Sigmoid colon (tissue), 7 donors: ENCODE measurements at regions of chr2 and their contacts with region 1.

Region 1: GRCh38 chr2:75199428-75200011 is at the start of gene TACR1:
- DNase-seq: peak; percentile 88
- H3K4me3 ChIP-seq: peak within 1 kb of the TSS; percentile 26 to 50 (median 46)
- H3K27ac ChIP-seq: peak within 1 kb of the TSS in 3 of 4 donors; percentile 27 to 48 (median 44)
- H3K4me1 ChIP-seq: peaks cover 0 to 28% (median 24%) of the 10 kb centered on the region in 4 donors
- H3K27me3 ChIP-seq: peaks cover 0 to 16% (median 0%) of the 10 kb centered on the region in 3 donors
- CTCF ChIP-seq: peak; percentile 27 to 55 (median 34)
- EP300 ChIP-seq: no peak
- POLR2A ChIP-seq: no peak
- total RNA-seq, gene TACR1: 0.54 to 2.5 (median 1.6) TPM

Region 2: GRCh38 chr2:75064691-75065396 is 134.7 kb before region 1 on chr2:
- intact Hi-C with region 1: loop called (anchors 5 kb)
- DNase-seq: peak; percentile 65
- H3K4me3 ChIP-seq: no peak overlapping the region
- H3K27ac ChIP-seq: no peak overlapping the region
- H3K4me1 ChIP-seq: peaks cover 0 to 13% (median 0%) of the 10 kb centered on the region in 4 donors
- H3K27me3 ChIP-seq: no peaks in the 10 kb centered on the region
- CTCF ChIP-seq: peak in 3 of 4 experiments; percentile 34 to 51 (median 49)
- EP300 ChIP-seq: no peak
- POLR2A ChIP-seq: no peak

Region 3: DNA sequence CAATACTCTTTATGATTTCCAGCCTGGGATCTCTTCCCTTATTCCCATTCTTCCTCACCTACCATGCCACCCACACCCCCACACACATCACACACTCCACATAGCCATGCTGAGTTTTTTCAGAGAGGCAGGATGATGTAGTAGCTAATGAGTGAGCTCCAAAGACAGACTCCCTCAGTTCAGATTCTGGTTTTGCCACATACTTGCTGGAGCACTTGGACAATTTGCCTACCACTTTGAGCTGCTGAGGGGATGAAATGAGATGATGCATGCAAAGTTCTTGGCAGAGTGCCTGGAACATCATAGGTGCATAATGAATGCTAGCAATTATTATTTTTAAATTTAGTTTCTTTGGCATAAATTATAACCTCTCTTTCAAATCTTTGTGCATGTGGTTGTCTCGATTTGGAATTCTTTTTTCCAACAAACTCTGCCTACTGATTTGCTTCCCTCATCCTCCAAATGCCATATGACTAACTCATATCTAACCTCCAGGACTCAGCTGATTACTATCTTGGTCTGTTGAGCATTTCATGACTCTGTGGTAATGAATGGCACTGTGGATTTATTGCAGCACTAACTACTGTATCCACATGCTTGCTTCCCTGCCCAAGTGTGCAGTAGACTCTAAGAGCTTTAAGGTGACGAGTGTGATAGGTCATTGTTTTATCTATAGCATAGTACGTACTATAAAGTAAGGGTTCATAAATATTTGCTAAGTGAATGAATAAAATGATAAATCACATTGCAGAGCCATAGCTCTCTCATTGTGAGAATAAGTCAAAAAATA is 99.3 kb before region 1 on chr2:
- intact Hi-C with region 1: no loop called
- DNase-seq: no peak
- H3K4me3 ChIP-seq: no peak overlapping the region
- H3K27ac ChIP-seq: no peak overlapping the region
- H3K4me1 ChIP-seq: peaks cover 0 to 10% (median 3%) of the 10 kb centered on the region in 4 donors
- H3K27me3 ChIP-seq: no peaks in the 10 kb centered on the region
- CTCF ChIP-seq: no peak
- EP300 ChIP-seq: no peak
- POLR2A ChIP-seq: no peak